MCF 10A (cell line): ENCODE measurements at regions of chr2 and their contacts with region 1.

Region 1: DNA sequence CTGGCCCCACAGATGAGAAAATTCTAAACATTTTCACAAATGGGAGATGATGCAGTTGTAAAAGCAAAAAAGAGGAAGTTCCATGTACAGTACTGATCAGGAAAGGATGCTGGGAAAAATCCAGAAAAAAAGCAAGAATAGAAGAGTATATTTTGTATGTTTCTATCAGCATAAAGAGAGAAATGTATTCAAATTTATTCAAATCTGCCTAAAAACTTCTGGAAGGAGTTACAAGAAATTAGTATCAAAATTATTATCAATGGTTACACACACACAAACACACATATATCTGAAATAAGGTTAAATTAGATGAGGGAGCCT is 24.3 kb downstream of the NGEF start:
- DNase-seq: no peak
- H3K4me3 Mint-ChIP-seq: peak overlapping the region; percentile 8
- H3K27ac Mint-ChIP-seq: peak overlapping the region; percentile 84
- H3K4me1 Mint-ChIP-seq: peaks cover 22% of the 10 kb centered on the region
- H3K27me3 Mint-ChIP-seq: no peaks in the 10 kb centered on the region
- CTCF ChIP-seq: no peak

Region 2: GRCh38 chr2:233033672-233034071 is 44.9 kb after region 1 on chr2:
- CTCF ChIA-PET with region 1: interaction called, 3 read pairs
- POLR2A ChIA-PET with region 1: no interaction called
- intact Hi-C with region 1: loop called (anchors 2 kb)
- DNase-seq: no peak
- H3K4me3 Mint-ChIP-seq: no peak overlapping the region
- H3K27ac Mint-ChIP-seq: no peak overlapping the region
- H3K4me1 Mint-ChIP-seq: peaks cover 10% of the 10 kb centered on the region
- H3K27me3 Mint-ChIP-seq: no peaks in the 10 kb centered on the region
- CTCF ChIP-seq: no peak

Region 3: DNA sequence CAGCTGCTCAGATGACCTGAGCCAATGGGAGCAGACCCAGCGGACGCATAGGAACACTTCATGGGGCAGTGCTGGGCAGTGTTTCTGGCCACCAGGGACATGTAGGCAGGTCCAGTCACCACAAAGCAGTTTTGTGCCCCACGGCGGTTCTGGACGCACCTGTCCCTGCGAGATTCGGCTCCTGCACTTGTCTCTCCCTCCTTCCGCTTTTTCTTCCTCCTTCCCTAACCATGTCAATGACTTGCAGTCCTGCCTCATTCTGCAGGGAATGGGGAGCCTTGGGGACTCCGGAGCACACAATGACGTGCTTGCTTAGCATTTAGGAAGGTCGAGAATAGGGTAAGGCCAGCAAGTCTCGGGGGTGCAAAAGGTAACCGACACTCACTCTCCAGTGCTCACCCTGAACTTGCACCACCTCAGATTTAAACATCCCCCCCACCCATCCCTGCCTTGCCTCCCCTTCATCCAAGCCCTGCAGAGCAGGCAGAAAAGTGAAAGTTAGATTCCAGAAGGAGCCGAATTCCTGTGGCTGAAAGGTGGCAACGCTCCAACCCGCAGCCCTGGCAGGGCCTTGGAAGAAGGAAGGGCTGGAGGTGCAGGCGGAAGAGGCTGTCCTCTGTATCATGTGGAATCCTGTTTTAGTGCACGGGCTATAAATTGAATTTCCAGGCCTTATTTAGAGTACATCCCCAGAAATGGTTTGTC is 222.3 kb after region 1 on chr2:
- CTCF ChIA-PET with region 1: no interaction called
- POLR2A ChIA-PET with region 1: interaction called, 3 read pairs
- intact Hi-C with region 1: loop called (anchors 1 kb)
- DNase-seq: peak; percentile 93
- H3K4me3 Mint-ChIP-seq: peak overlapping the region; percentile 57
- H3K27ac Mint-ChIP-seq: no peak overlapping the region
- H3K4me1 Mint-ChIP-seq: peaks cover 40% of the 10 kb centered on the region
- H3K27me3 Mint-ChIP-seq: no peaks in the 10 kb centered on the region
- CTCF ChIP-seq: no peak

Region 4: GRCh38 chr2:233387667-233388528 is 399.2 kb after region 1 on chr2:
- CTCF ChIA-PET with region 1: no interaction called
- POLR2A ChIA-PET with region 1: no interaction called
- intact Hi-C with region 1: no loop called
- DNase-seq: peak; percentile 96
- H3K4me3 Mint-ChIP-seq: peak overlapping the region; percentile 40
- H3K27ac Mint-ChIP-seq: peak overlapping the region; percentile 80
- H3K4me1 Mint-ChIP-seq: peaks cover 39% of the 10 kb centered on the region
- H3K27me3 Mint-ChIP-seq: no peaks in the 10 kb centered on the region
- CTCF ChIP-seq: no peak